Activated naive CD4-positive, alpha-beta T cell treated with anti-CD3 and anti-CD28 coated beads for 36 hours (primary cell): ENCODE measurements at regions of chr14 and their contacts with region 1.

Region 1: DNA sequence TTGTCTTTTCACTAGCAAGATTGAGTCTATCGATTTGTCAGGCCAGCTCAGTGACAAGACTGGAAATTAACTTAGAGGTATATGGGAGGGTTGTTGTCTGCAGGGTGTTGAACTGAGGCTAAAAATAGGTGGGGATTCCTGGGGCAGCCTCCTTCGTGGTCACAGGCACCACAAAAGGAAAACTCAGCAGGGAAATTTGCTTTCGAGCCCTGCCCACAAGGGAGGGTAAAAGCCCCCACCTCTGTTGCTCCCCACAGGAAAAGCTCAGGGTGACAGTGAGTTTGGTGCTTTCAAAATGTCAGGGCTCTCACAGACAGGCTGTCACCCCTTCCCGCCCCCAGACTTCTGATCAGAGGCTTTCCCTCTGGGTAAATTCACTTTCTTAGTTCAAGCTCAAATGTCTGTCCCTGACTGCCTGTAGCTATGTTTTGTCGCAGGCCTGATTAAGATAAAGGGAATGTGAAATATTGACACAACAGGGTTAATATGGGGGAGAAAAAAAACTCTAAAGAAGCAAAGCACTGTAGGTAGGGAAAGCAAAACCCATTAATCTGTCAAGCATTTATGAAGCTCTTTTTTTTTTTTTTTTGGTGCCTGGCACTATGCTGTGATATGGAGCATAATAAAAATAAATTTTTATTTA is 11.7 kb upstream of the NFKBIA start:
- DNase-seq: peak; percentile 89
- H3K4me3 Mint-ChIP-seq: peak overlapping the region; percentile 59
- H3K27ac Mint-ChIP-seq: peak overlapping the region; percentile 91
- H3K4me1 Mint-ChIP-seq: peaks cover 47% of the 10 kb centered on the region
- H3K27me3 Mint-ChIP-seq: no peaks in the 10 kb centered on the region

Region 2: GRCh38 chr14:34461334-34462131 is 954.7 kb before region 1 on chr14:
- CTCF ChIA-PET with region 1: no interaction called
- intact Hi-C with region 1: loop called (anchors 5 kb)
- DNase-seq: peak; percentile 41
- H3K4me3 Mint-ChIP-seq: peak overlapping the region; percentile 87
- H3K27ac Mint-ChIP-seq: peak overlapping the region; percentile 65
- H3K4me1 Mint-ChIP-seq: peaks cover 16% of the 10 kb centered on the region
- H3K27me3 Mint-ChIP-seq: no peaks in the 10 kb centered on the region

Region 3: DNA sequence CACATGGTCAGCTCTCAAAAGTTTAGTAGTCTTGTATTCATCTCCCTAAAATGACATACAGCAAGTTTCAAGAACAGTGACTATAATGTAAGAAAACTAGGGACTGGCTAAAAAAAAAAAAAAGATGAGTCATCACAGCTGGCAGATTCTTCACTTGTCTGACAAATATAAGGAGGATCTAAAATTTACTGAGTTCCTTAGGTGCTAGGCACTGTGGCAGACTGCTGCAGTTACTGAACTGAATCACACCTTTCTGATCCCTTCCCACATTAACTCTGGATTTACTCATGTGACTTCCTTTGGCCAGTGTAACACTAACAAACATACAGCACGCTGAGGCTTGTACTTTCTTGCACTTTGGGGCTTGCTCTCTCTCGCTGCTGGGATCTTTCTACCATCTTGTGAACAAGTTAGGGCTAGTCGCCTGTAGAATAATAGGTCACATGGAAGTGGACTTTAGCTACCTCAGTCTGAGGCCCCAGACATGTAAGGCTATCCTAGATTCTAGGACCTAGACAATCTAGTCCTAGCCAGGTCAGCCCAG is 573.1 kb before region 1 on chr14:
- CTCF ChIA-PET with region 1: no interaction called
- intact Hi-C with region 1: loop called (anchors 1 kb)
- DNase-seq: peak; percentile 59
- H3K4me3 Mint-ChIP-seq: no peak overlapping the region
- H3K27ac Mint-ChIP-seq: peak overlapping the region; percentile 89
- H3K4me1 Mint-ChIP-seq: peaks cover 30% of the 10 kb centered on the region
- H3K27me3 Mint-ChIP-seq: no peaks in the 10 kb centered on the region

Region 4: GRCh38 chr14:35121887-35122695 is 294.1 kb before region 1 on chr14 and contains the starts of genes PPP2R3C and PRORP:
- CTCF ChIA-PET with region 1: interaction called, 6 read pairs
- intact Hi-C with region 1: loop called (anchors 1 kb)
- DNase-seq: peak; percentile 93
- H3K4me3 Mint-ChIP-seq: peak within 1 kb of the TSS; percentile 95
- H3K27ac Mint-ChIP-seq: peak within 1 kb of the TSS; percentile 99
- H3K4me1 Mint-ChIP-seq: peaks cover 64% of the 10 kb centered on the region
- H3K27me3 Mint-ChIP-seq: no peaks in the 10 kb centered on the region
- total RNA-seq, gene PPP2R3C: 44.5 to 47.5 TPM
- total RNA-seq, gene PRORP: 37.9 to 40.8 TPM

Region 5: GRCh38 chr14:35261774-35262173 is 154.5 kb before region 1 on chr14:
- CTCF ChIA-PET with region 1: interaction called, 21 read pairs
- intact Hi-C with region 1: no loop called
- DNase-seq: no peak
- H3K4me3 Mint-ChIP-seq: no peak overlapping the region
- H3K27ac Mint-ChIP-seq: no peak overlapping the region
- H3K4me1 Mint-ChIP-seq: peaks cover 4% of the 10 kb centered on the region
- H3K27me3 Mint-ChIP-seq: no peaks in the 10 kb centered on the region

Region 6: DNA sequence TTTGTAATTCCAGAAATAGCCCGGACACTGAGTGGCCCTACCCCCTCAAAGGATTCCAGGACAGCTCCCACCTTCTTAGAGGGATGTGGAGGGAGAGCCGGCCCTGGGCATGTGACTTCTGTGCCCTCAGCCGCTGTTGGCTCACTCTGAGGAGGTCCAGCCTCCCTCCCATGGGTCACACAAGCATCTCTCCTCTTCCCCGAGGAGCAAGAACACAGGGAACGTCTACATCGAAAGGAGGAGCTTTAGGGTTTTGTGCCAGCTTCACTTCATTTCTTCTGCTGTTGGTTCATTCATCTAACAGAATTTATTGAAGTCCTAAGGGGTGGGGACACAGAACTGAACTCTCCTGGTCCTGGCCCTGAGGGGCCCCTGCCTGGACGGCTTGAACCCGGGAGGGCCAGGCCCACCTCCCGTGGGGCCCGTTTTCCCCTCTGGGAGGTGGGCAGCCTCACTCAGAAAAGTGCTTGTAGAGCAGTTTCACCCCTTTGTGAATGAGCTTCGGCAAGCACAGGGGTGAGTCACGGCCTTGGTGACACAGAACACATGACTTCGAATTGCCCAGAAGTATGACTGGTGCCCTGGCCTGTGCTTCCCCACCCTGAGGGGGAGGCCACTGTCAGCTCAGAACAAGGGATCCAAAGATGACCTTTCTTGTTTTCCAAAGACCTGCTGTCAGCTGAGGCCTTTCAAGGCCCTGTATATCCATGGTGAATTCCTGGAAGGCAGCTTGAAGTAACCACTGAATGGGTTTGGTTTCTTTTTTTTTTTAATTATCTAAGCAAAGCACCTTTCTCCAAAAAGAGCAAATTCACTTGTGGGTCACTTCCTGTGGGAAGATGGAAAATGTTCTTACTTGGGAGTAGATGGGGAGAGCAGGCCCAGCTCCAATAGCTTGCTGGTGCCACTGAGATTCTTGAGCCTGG is 50.8 kb before region 1 on chr14:
- CTCF ChIA-PET with region 1: interaction called, 3 read pairs
- intact Hi-C with region 1: loop called (anchors 1 kb)
- DNase-seq: peak; percentile 94
- H3K4me3 Mint-ChIP-seq: no peak overlapping the region
- H3K27ac Mint-ChIP-seq: peak overlapping the region; percentile 92
- H3K4me1 Mint-ChIP-seq: peaks cover 60% of the 10 kb centered on the region
- H3K27me3 Mint-ChIP-seq: no peaks in the 10 kb centered on the region

Region 7: GRCh38 chr14:35533357-35534207 is 117.4 kb after region 1 on chr14 and contains the start of gene INSM2:
- CTCF ChIA-PET with region 1: no interaction called
- intact Hi-C with region 1: no loop called
- DNase-seq: peak; percentile 61
- H3K4me3 Mint-ChIP-seq: peak within 1 kb of the TSS; percentile 73
- H3K27ac Mint-ChIP-seq: no peak within 1 kb of the TSS
- H3K4me1 Mint-ChIP-seq: peaks cover 10% of the 10 kb centered on the region
- H3K27me3 Mint-ChIP-seq: peaks cover 61% of the 10 kb centered on the region
- total RNA-seq, gene INSM2: not detected

Region 8: GRCh38 chr14:35594616-35595015 is 178.4 kb after region 1 on chr14:
- CTCF ChIA-PET with region 1: no interaction called
- intact Hi-C with region 1: no loop called
- DNase-seq: no peak
- H3K4me3 Mint-ChIP-seq: no peak overlapping the region
- H3K27ac Mint-ChIP-seq: no peak overlapping the region
- H3K4me1 Mint-ChIP-seq: no peaks in the 10 kb centered on the region
- H3K27me3 Mint-ChIP-seq: no peaks in the 10 kb centered on the region

Region 9: GRCh38 chr14:35814371-35815005 is 398.3 kb after region 1 on chr14:
- CTCF ChIA-PET with region 1: interaction called, 3 read pairs
- intact Hi-C with region 1: loop called (anchors 5 kb)
- DNase-seq: peak; percentile 91
- H3K4me3 Mint-ChIP-seq: no peak overlapping the region
- H3K27ac Mint-ChIP-seq: no peak overlapping the region
- H3K4me1 Mint-ChIP-seq: peaks cover 6% of the 10 kb centered on the region
- H3K27me3 Mint-ChIP-seq: no peaks in the 10 kb centered on the region